ENCODE measurements at regions of chr5 and their contacts with region 1.

Region 1: GRCh38 chr5:30607301-30607700 is 586.2 kb upstream of the CDH6 start:
- DNase-seq: peak; percentile 45
- ATAC-seq: peak; percentile 17; the same call in 1 of the 3 replicates
- H3K4me3 ChIP-seq: no peak overlapping the region
- H3K27ac ChIP-seq: peak overlapping the region; percentile 62
- H3K4me1 ChIP-seq: peaks cover 60% of the 10 kb centered on the region
- H3K27me3 ChIP-seq: no peaks in the 10 kb centered on the region
- CTCF ChIP-seq: no peak
- EP300 ChIP-seq: peak in 1 of 2 experiments; percentile 41; a peak in 1 of 4 replicates
- POLR2A ChIP-seq: no peak
- RAD21 ChIP-seq: no peak

Region 2: DNA sequence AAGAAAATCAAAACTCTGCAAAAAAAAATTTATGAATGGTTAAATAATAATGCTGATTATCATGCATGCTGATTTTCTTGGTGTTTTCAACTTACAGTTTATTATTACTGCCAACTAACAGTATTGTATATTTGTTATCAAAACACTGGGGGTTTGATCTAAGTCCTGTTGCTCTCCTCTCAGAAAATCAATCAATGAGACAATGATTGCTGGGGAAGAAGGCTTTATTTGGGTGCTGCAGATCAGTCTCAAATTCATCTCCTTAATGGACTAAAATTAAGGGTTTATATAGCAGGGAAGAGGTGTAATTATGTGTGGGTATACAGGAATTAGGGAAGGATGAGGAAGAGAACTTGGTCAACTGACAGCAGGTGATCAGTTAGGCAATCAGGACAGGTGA is 20.6 kb after region 1 on chr5:
- CTCF ChIA-PET with region 1: no interaction called
- POLR2A ChIA-PET with region 1: no interaction called
- in situ Hi-C with region 1: no loop called
- intact Hi-C with region 1: loop called (anchors 1 kb)
- DNase-seq: no peak
- ATAC-seq: no peak
- H3K4me3 ChIP-seq: no peak overlapping the region
- H3K27ac ChIP-seq: no peak overlapping the region
- H3K4me1 ChIP-seq: no peaks in the 10 kb centered on the region
- H3K27me3 ChIP-seq: no peaks in the 10 kb centered on the region
- CTCF ChIP-seq: no peak
- EP300 ChIP-seq: no peak
- POLR2A ChIP-seq: no peak
- RAD21 ChIP-seq: no peak

Region 3: DNA sequence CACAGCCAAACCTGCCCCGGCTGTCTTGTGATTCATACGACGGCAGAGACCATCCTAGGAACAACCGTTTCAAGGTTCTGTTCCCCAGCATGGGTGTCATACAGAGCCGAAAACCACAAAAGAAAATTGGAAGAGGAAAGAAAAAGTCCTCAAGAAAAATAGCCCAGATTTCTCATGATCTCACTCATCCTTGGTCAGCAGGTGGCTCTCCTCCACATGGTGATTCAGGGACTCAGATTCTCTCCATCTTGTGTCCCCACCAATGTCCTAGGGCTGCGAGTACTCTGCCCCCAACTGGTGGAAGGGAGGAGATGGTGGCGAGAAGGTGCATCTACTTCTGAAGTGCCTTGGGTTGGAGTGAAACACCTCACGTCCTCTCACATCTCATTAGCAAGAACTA is 1057.3 kb after region 1 on chr5:
- CTCF ChIA-PET with region 1: no interaction called
- POLR2A ChIA-PET with region 1: no interaction called
- in situ Hi-C with region 1: no loop called
- intact Hi-C with region 1: no loop called
- DNase-seq: peak; percentile 55
- ATAC-seq: peak; percentile 89
- H3K4me3 ChIP-seq: no peak overlapping the region
- H3K27ac ChIP-seq: no peak overlapping the region
- H3K4me1 ChIP-seq: no peaks in the 10 kb centered on the region
- H3K27me3 ChIP-seq: peaks cover 0 to 15% of the 10 kb centered on the region in 2 experiments; a peak in 3 of 5 replicates
- CTCF ChIP-seq: peak; percentile 53
- EP300 ChIP-seq: no peak
- POLR2A ChIP-seq: no peak
- RAD21 ChIP-seq: no peak